ENCODE measurements at regions of chr7 and their contacts with region 1.

Region 1: GRCh38 chr7:30026229-30027064 is at the start of gene FKBP14:
- DNase-seq: peak; percentile 98
- ATAC-seq: peak; percentile 83
- H3K4me3 ChIP-seq: peak within 1 kb of the TSS; percentile 84
- H3K27ac ChIP-seq: peak within 1 kb of the TSS; percentile 64
- H3K4me1 ChIP-seq: peaks cover 20% of the 10 kb centered on the region; the same call in 1 of the 2 replicates
- H3K27me3 ChIP-seq: no peaks in the 10 kb centered on the region
- CTCF ChIP-seq: no peak
- total RNA-seq, gene FKBP14: 9.0 and 10.1 TPM in 2 replicates

Region 2: GRCh38 chr7:29935111-29935510 is 91.3 kb before region 1 on chr7:
- CTCF ChIA-PET with region 1: no interaction called
- POLR2A ChIA-PET with region 1: no interaction called
- intact Hi-C with region 1: loop called (anchors 5 kb)
- DNase-seq: peak; percentile 83
- ATAC-seq: peak; percentile 71
- H3K4me3 ChIP-seq: no peak overlapping the region
- H3K27ac ChIP-seq: peak overlapping the region; percentile 49
- H3K4me1 ChIP-seq: peaks cover 43% of the 10 kb centered on the region
- H3K27me3 ChIP-seq: no peaks in the 10 kb centered on the region
- CTCF ChIP-seq: no peak

Region 3: GRCh38 chr7:30173058-30173897 is 146.8 kb after region 1 on chr7:
- CTCF ChIA-PET with region 1: no interaction called
- POLR2A ChIA-PET with region 1: no interaction called
- intact Hi-C with region 1: loop called (anchors 5 kb)
- DNase-seq: peak; percentile 94
- ATAC-seq: peak; percentile 86
- H3K4me3 ChIP-seq: no peak overlapping the region
- H3K27ac ChIP-seq: peak overlapping the region; percentile 93
- H3K4me1 ChIP-seq: peaks cover 48% of the 10 kb centered on the region
- H3K27me3 ChIP-seq: no peaks in the 10 kb centered on the region
- CTCF ChIP-seq: peak; percentile 64

Region 4: GRCh38 chr7:30276203-30276900 is 249.9 kb after region 1 on chr7:
- CTCF ChIA-PET with region 1: no interaction called
- POLR2A ChIA-PET with region 1: no interaction called
- intact Hi-C with region 1: no loop called
- DNase-seq: peak; percentile 82
- ATAC-seq: peak; percentile 93
- H3K4me3 ChIP-seq: no peak overlapping the region
- H3K27ac ChIP-seq: no peak overlapping the region
- H3K4me1 ChIP-seq: no peaks in the 10 kb centered on the region
- H3K27me3 ChIP-seq: no peaks in the 10 kb centered on the region
- CTCF ChIP-seq: peak; percentile 87

Measured in PC-3 (cell line).